Heart right ventricle (tissue), 16 donors: ENCODE measurements at regions of chr4 and their contacts with region 1.

Region 1: GRCh38 chr4:189912170-189912569 is 28.5 kb upstream of the FRG1 start:
- DNase-seq: no peak
- ATAC-seq: no peak
- H3K4me3 ChIP-seq: no peak overlapping the region
- H3K27ac ChIP-seq: no peak overlapping the region
- H3K4me1 ChIP-seq: no peaks in the 10 kb centered on the region
- H3K27me3 ChIP-seq: no peaks in the 10 kb centered on the region
- CTCF ChIP-seq: peak in 6 of 9 donors; percentile 21 to 44 (median 34)

Region 2: GRCh38 chr4:189802884-189803283 is 109.3 kb before region 1 on chr4:
- intact Hi-C with region 1: loop called in 1 of 10 experiments (anchors 10 kb)
- DNase-seq: no peak
- ATAC-seq: no peak
- H3K4me3 ChIP-seq: no peak overlapping the region
- H3K27ac ChIP-seq: no peak overlapping the region
- H3K4me1 ChIP-seq: peaks cover 0 to 4% (median 0%) of the 10 kb centered on the region in 9 donors
- H3K27me3 ChIP-seq: no peaks in the 10 kb centered on the region
- CTCF ChIP-seq: peak in 2 of 9 donors; percentile 8 to 9

Region 3: DNA sequence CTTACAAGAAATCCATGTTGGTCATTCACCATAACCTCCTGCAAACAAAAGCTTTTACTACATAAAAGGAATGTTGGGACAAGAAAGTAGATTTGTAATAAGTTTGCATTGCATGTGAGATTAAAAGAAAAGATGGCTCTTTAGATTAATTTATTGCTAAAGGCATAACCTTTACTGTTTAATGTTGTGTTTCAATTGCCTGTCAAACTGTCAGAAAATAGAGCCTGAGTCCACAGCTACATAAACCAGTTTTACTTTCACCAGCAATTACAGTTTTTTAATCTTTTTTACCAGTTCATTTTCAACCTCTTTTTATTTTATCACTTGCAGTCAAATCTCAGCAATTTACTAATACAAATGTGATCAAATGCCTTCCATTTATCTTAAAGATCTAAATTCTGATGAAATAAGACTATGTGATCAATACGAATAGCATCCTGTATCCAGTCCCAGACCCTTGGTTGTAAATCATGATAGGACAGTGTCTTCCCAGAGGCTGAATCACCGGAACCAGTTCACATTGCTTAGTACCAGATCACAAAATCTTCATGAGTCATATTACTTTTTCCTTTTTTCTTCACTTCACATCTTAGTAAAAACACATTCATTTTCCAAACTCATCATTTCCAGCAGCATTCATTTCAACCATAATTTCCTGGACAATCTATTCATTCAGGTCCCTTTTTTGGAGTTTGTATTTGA is 66.9 kb before region 1 on chr4:
- intact Hi-C with region 1: no loop called
- DNase-seq: no peak
- ATAC-seq: no peak
- H3K4me3 ChIP-seq: no peak overlapping the region
- H3K27ac ChIP-seq: no peak overlapping the region
- H3K4me1 ChIP-seq: peaks cover 0 to under 1% (median 0%) of the 10 kb centered on the region in 9 donors
- H3K27me3 ChIP-seq: no peaks in the 10 kb centered on the region
- CTCF ChIP-seq: no peak

Region 4: DNA sequence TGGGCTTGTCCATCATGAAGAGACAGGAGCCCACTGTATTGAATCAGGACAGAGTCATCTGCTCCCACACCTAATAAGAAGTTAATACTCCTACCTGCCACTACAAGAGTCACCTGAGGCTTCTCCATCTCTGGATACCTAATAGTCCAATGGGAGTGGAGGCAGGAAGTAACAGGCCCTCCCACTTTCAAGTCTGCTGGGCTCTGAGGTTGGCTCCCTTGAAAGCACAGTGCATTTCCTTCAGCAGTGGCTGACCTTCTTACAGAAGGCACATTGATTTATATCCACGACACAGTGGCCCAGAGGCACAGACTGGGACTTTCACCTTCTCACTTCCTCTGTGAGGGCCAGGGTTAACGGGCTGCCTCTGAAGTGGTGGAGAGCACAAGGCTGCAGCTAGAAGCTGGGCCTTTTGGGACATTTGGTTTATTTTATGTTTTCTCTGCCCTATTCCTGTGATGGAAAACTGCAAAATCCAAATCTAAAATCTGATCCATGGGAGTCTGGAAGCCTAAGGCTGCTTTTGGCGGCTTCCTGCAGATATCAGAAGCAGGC is 76.8 kb after region 1 on chr4:
- intact Hi-C with region 1: no loop called
- DNase-seq: no peak
- ATAC-seq: no peak
- H3K4me3 ChIP-seq: no peak overlapping the region
- H3K27ac ChIP-seq: no peak overlapping the region
- H3K4me1 ChIP-seq: no peaks in the 10 kb centered on the region
- H3K27me3 ChIP-seq: peaks cover 0 to 9% (median 0%) of the 10 kb centered on the region in 7 donors
- CTCF ChIP-seq: no peak